A549 (cell line): ENCODE measurements at regions of chr6 and their contacts with region 1.

Region 1: DNA sequence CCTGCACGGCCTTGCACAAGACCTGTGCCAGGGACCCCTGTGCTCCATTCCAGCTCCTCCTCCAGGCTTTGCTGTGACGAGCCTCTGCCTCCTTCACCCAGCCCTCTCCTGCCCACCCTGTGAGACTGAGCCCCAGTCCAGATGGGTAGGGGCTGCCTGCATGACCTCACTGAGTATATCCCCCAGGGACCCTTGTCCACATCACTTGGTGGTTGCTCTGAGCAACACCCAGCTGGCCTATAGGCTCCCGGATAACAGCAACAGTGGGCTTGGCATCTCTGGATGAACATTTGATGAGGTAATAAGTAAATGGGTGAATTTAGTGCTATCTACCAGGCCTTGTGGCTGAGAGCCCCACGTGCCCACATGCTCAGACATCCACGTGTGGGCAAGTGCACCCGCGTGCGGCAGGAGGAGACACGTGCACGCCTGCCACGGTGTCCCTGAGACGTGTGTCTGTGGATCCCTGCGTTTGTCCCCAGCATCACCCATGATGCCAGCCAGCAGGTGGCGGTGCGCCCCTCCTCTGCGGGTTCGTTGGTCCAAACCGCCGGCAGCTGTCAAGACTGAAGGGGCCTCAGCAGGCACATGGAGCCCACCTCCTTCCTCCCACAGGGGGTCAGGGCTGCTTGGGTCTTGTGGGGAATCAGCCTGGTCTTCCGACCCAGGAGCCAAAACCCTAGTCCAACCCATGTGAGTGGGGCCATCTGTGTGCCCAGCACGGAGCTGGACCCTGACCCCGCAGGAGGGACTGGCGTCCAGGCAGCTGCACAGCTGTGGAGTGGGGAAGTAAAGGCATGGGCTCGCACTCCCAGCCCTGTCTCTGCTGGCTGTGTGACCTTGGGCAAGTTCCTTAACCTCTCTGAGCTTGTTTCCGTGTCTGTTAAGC is 45.9 kb downstream of the FGD2 start:
- DNase-seq: peak; percentile 76 to 78
- ATAC-seq: peak; percentile 82 to 89
- H3K4me3 ChIP-seq: no peak overlapping the region
- H3K27ac ChIP-seq: peak overlapping the region; percentile 65 to 74
- H3K4me1 ChIP-seq: peaks cover 32% of the 10 kb centered on the region
- CTCF ChIP-seq: peak; percentile 80
- EP300 ChIP-seq: no peak
- POLR2A ChIP-seq: no peak
- RAD21 ChIP-seq: peak; percentile 95 to 96

Region 2: DNA sequence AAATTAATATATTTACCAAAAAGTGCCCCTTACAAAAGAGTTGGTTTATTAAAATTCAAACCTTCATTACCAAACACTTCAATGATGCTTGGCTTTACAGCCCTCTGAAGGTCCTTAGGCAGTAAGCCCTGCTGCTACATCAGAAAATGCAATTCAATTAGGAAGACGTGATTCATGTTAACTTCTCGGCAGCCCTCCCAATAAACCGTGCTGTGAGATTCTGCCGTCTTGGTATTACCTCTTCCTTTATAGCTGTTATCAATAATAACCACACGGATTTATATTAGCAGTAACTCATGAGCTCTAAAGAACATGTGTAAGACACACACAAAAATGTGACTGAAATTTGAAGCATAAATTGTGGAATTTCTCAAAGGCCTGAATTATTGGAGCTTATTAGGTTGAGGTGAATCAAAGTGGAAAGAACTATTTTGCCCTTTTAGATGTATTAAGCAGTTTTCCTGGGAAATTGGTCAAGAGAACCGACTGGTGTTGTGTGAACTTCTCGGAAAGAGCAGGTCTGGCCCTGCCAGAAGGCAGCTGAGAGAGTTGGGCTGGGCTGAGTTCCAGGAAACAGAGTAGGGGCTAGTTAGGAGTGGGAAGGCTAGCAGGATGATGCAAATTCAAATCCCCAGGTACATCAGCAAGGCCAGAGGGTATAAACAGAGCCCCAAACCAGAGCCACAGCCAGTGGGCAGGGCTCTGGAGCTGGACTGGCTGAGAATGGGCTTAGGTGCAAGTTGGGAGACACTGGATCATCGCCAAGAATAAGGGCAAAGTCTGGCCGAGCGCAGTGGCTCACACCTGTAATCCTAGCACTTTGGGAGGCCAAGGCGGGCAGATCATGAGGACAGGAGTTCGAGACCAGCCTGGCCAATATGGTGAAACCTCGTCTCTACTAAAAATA is 12.8 kb before region 1 on chr6:
- CTCF ChIA-PET with region 1: interaction called, 371 read pairs
- POLR2A ChIA-PET with region 1: no interaction called
- DNase-seq: no peak
- ATAC-seq: no peak
- H3K4me3 ChIP-seq: no peak overlapping the region
- H3K27ac ChIP-seq: peak overlapping the region in 1 of 2 experiments; percentile 11; a peak in 3 of 6 replicates
- H3K4me1 ChIP-seq: peaks cover 13% of the 10 kb centered on the region
- CTCF ChIP-seq: no peak
- EP300 ChIP-seq: no peak
- POLR2A ChIP-seq: no peak
- RAD21 ChIP-seq: no peak

Region 3: DNA sequence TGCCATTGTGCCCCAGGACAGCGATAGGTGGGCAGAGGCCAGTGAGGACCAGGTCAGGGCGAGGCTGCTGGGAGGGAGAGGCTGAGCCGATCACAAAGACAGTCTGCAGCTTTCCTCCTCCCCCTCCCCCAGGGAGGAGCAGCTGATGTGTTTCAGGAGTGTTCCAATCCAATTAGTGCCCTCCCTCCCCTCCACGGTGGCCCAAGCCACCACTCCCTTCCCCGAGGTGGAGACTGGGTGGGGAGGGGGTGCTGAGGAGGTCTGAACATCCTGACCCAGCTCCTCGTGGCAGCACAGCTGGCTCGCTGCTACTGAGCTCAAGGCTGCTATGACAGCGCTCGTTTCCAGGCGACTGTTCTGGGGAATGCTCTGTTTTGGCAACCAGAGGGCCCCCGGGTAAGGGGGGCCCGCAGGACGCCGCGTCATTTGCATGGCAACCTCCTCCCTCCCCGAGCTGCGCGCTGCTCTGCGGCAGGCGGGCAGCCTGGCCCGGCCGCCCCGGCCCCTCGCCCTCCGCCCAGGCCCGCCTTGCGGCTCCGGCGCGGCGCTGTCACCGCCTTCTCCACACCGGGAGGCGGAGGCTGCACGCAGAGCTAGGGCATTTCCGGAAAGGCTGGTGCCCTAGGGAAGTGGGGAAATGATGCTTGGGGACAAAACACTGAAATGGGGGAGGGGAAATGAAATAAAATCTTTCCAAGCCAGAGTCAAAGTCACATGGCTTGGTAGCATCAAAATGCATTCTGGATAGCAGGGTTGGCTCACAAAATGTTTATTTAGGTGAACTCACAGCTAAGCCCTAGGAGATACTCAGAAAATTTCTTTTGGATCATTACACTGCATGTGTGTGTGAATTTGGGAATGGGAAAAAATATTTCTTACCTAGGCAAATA is 51.1 kb after region 1 on chr6:
- CTCF ChIA-PET with region 1: interaction called, 10 read pairs
- POLR2A ChIA-PET with region 1: interaction called, 6 read pairs
- DNase-seq: peak; percentile 48 to 82
- ATAC-seq: peak; percentile 90
- H3K4me3 ChIP-seq: peak overlapping the region; percentile 30
- H3K27ac ChIP-seq: peak overlapping the region; percentile 72 to 89
- H3K4me1 ChIP-seq: peaks cover 44% of the 10 kb centered on the region
- CTCF ChIP-seq: no peak; the same call in 2 of the 3 replicates
- EP300 ChIP-seq: peak in 1 of 2 experiments; percentile 17; a peak in 1 of 5 replicates
- POLR2A ChIP-seq: peak; percentile 34; the same call in 1 of the 2 replicates
- RAD21 ChIP-seq: peak in 1 of 2 experiments; percentile 17; a peak in 1 of 5 replicates

Region 4: GRCh38 chr6:37125783-37126492 is 74.6 kb after region 1 on chr6:
- CTCF ChIA-PET with region 1: interaction called, 39 read pairs
- POLR2A ChIA-PET with region 1: interaction called, 3 read pairs
- DNase-seq: peak in 1 of 2 experiments; percentile 58
- ATAC-seq: peak in 1 of 2 experiments; percentile 39; a peak in 3 of 6 replicates
- H3K4me3 ChIP-seq: no peak overlapping the region
- H3K27ac ChIP-seq: peak overlapping the region; percentile 76 to 93
- H3K4me1 ChIP-seq: peaks cover 55% of the 10 kb centered on the region
- CTCF ChIP-seq: no peak
- EP300 ChIP-seq: no peak
- POLR2A ChIP-seq: no peak
- RAD21 ChIP-seq: no peak

Region 5: DNA sequence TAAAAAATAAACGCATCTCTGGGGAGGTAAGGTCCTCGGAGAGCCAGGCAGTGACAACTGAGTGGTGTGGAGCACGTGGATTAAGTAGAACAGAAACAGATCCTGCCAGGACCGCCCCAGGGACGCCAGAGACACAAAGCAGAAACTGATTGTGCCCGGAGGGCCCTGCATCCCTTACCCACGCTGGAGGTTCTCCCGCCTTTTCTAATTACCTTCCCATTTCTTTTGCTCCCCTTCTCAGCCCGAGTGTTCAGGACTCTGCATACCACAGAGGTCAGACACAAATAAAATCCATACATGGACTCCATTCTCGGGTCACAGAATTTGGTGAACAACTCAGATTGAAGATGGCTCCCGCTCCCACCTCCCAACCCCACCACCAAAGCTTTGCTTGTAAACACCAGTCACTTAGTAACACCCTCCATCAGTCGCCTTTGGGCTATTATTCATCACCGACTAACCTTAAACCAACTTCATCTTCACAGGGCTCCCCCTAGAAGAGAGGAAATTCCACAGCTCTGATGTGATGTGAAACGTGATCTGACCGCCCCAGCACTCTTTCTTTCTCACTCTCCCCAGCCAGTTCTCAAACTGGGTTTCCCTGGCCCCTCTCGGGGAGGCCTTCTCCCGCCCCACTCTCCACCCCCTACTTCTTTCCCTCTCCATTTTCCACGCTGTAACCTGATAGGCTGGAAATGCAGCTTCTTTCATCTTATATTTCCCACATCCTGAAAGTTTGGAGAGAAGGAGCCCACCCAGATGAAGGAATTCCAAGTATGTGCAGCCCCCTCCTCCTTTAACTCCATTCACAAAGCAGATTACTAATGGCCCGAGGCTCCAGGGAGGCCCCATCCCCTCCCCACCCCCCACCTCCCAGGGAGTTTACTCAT is 86.1 kb after region 1 on chr6:
- CTCF ChIA-PET with region 1: interaction called, 39 read pairs
- POLR2A ChIA-PET with region 1: no interaction called
- DNase-seq: peak; percentile 85 to 94
- ATAC-seq: peak; percentile 68 to 76
- H3K4me3 ChIP-seq: peak overlapping the region; percentile 32
- H3K27ac ChIP-seq: peak overlapping the region; percentile 93 to 96
- H3K4me1 ChIP-seq: peaks cover 82% of the 10 kb centered on the region
- CTCF ChIP-seq: no peak
- EP300 ChIP-seq: peak; percentile 47 to 60; a peak in 2 of 5 replicates
- POLR2A ChIP-seq: no peak
- RAD21 ChIP-seq: no peak; a peak in 2 of 5 replicates

Region 6: GRCh38 chr6:37202788-37203491 is 151.6 kb after region 1 on chr6:
- CTCF ChIA-PET with region 1: interaction called, 159 read pairs
- POLR2A ChIA-PET with region 1: no interaction called
- DNase-seq: no peak
- ATAC-seq: no peak
- H3K4me3 ChIP-seq: no peak overlapping the region
- H3K27ac ChIP-seq: no peak overlapping the region
- H3K4me1 ChIP-seq: peaks cover 27% of the 10 kb centered on the region
- CTCF ChIP-seq: no peak
- EP300 ChIP-seq: no peak
- POLR2A ChIP-seq: no peak
- RAD21 ChIP-seq: no peak

Region 7: GRCh38 chr6:37207903-37208456 is 156.6 kb after region 1 on chr6:
- CTCF ChIA-PET with region 1: interaction called, 159 read pairs
- POLR2A ChIA-PET with region 1: no interaction called
- DNase-seq: peak; percentile 76 to 83
- ATAC-seq: peak; percentile 84 to 91
- H3K4me3 ChIP-seq: no peak overlapping the region
- H3K27ac ChIP-seq: no peak overlapping the region
- H3K4me1 ChIP-seq: peaks cover 29% of the 10 kb centered on the region
- CTCF ChIP-seq: peak; percentile 63
- EP300 ChIP-seq: no peak
- POLR2A ChIP-seq: no peak
- RAD21 ChIP-seq: peak; percentile 61 to 67

Region 8: GRCh38 chr6:37429352-37429750 is 378.0 kb after region 1 on chr6:
- CTCF ChIA-PET with region 1: no interaction called
- POLR2A ChIA-PET with region 1: no interaction called
- DNase-seq: peak in 1 of 2 experiments; percentile 31
- ATAC-seq: no peak
- H3K4me3 ChIP-seq: no peak overlapping the region
- H3K27ac ChIP-seq: no peak overlapping the region
- H3K4me1 ChIP-seq: peaks cover 6% of the 10 kb centered on the region; the same call in 1 of the 3 replicates
- CTCF ChIP-seq: no peak
- EP300 ChIP-seq: no peak
- POLR2A ChIP-seq: no peak
- RAD21 ChIP-seq: no peak